ENCODE measurements at regions of chr3 and their contacts with region 1.

Region 1: GRCh38 chr3:101643861-101644613 is 32.9 kb downstream of the ZBTB11 start:
- DNase-seq: peak; percentile 69
- H3K4me3 Mint-ChIP-seq: no peak overlapping the region
- H3K27ac Mint-ChIP-seq: peak overlapping the region; percentile 87
- H3K4me1 Mint-ChIP-seq: peaks cover 32% of the 10 kb centered on the region
- H3K27me3 Mint-ChIP-seq: no peaks in the 10 kb centered on the region

Region 2: DNA sequence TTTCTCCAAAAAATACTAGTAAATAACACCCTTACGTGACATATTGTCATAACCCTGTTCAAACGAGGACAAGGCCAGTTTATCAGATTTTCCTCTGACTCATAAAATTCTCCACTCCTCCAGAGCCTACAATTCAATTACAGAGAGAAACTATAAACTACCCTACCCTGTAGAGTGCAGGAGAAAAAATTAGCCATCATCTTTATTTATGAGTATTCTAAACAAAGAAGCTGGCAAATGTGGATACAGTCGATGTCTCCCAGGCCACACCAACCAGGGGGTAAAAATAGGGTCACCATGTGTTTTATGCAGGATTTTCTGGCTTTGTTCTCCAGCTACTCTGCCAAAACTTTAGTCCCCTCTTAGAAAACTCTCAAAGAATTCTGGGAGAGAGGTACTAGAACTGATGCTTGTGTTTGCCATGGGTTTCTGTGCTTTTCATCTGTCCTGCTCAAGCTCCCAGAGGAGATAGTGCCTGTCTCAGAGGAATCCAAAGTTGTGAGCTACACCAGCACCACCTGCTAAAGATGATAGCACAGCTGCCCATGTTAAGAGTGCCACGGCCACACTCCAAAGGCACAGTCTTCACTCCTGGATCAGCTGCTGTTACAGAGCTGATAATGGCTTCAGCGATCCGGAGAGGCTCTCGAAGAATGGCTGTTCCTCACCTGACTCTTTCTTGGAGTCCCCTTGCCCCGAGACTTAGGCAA is 473.8 kb before region 1 on chr3:
- CTCF ChIA-PET with region 1: no interaction called
- POLR2A ChIA-PET with region 1: no interaction called
- intact Hi-C with region 1: loop called (anchors 1 kb)
- DNase-seq: no peak
- H3K4me3 Mint-ChIP-seq: no peak overlapping the region
- H3K27ac Mint-ChIP-seq: no peak overlapping the region
- H3K4me1 Mint-ChIP-seq: peaks cover 15% of the 10 kb centered on the region
- H3K27me3 Mint-ChIP-seq: peaks cover 4% of the 10 kb centered on the region

Region 3: GRCh38 chr3:101381809-101382208 is 262.2 kb before region 1 on chr3:
- CTCF ChIA-PET with region 1: interaction called, 3 read pairs
- POLR2A ChIA-PET with region 1: no interaction called
- intact Hi-C with region 1: loop called (anchors 2 kb)
- DNase-seq: no peak
- H3K4me3 Mint-ChIP-seq: no peak overlapping the region
- H3K27ac Mint-ChIP-seq: no peak overlapping the region
- H3K4me1 Mint-ChIP-seq: peaks cover 50% of the 10 kb centered on the region
- H3K27me3 Mint-ChIP-seq: no peaks in the 10 kb centered on the region

Region 4: DNA sequence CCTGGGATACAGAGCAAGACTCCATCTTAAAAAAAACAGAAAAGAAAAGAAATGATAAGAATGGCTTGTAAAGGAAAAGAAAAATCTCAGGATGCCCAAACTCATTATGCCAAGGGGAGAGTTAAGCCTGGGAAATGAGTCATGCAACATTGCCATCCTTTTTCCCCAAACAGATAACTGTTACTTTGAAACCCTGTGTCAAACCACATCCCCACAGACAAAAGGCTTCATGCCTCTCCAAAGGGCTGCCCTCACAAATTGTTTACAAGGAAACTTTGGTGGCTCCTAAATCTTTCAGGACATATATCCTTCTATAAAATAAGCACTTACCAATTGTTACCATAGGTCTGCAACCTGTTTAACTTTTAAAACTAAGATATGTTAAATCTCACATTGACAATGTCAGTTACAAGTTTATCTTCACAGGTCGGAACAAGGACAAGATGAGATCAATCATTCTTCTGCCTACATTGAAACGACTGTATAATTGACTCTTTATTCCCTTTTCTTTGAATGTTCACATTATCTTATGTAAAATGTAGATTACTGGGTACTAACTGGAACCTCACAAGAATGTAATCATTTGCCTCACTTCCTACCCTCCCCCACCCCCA is 112.5 kb before region 1 on chr3:
- CTCF ChIA-PET with region 1: no interaction called
- POLR2A ChIA-PET with region 1: no interaction called
- intact Hi-C with region 1: no loop called
- DNase-seq: peak; percentile 16
- H3K4me3 Mint-ChIP-seq: no peak overlapping the region
- H3K27ac Mint-ChIP-seq: peak overlapping the region; percentile 53
- H3K4me1 Mint-ChIP-seq: peaks cover 34% of the 10 kb centered on the region
- H3K27me3 Mint-ChIP-seq: no peaks in the 10 kb centered on the region

Region 5: GRCh38 chr3:101665851-101666250 is 21.8 kb after region 1 on chr3:
- CTCF ChIA-PET with region 1: no interaction called
- POLR2A ChIA-PET with region 1: no interaction called
- intact Hi-C with region 1: no loop called
- DNase-seq: no peak
- H3K4me3 Mint-ChIP-seq: no peak overlapping the region
- H3K27ac Mint-ChIP-seq: no peak overlapping the region
- H3K4me1 Mint-ChIP-seq: peaks cover 3% of the 10 kb centered on the region
- H3K27me3 Mint-ChIP-seq: no peaks in the 10 kb centered on the region

Region 6: GRCh38 chr3:101676765-101677435 is 32.9 kb after region 1 on chr3 and contains the start of gene ZBTB11:
- CTCF ChIA-PET with region 1: no interaction called
- POLR2A ChIA-PET with region 1: interaction called, 3 read pairs
- intact Hi-C with region 1: loop called (anchors 1 kb)
- DNase-seq: peak; percentile 100
- H3K4me3 Mint-ChIP-seq: peak within 1 kb of the TSS; percentile 93
- H3K27ac Mint-ChIP-seq: peak within 1 kb of the TSS; percentile 91
- H3K4me1 Mint-ChIP-seq: peaks cover 57% of the 10 kb centered on the region
- H3K27me3 Mint-ChIP-seq: no peaks in the 10 kb centered on the region
- total RNA-seq, gene ZBTB11: 28.0 to 30.3 TPM

Region 7: GRCh38 chr3:101836652-101837598 is 192.9 kb after region 1 on chr3:
- CTCF ChIA-PET with region 1: no interaction called
- POLR2A ChIA-PET with region 1: no interaction called
- intact Hi-C with region 1: no loop called
- DNase-seq: no peak
- H3K4me3 Mint-ChIP-seq: no peak overlapping the region
- H3K27ac Mint-ChIP-seq: no peak overlapping the region
- H3K4me1 Mint-ChIP-seq: peaks cover 51% of the 10 kb centered on the region
- H3K27me3 Mint-ChIP-seq: no peaks in the 10 kb centered on the region

Measured in activated CD4-positive, alpha-beta memory T cell treated with anti-CD3 and anti-CD28 coated beads for 36 hours (primary cell).